ENCODE measurements at regions of chr3 and their contacts with region 1.

Region 1: DNA sequence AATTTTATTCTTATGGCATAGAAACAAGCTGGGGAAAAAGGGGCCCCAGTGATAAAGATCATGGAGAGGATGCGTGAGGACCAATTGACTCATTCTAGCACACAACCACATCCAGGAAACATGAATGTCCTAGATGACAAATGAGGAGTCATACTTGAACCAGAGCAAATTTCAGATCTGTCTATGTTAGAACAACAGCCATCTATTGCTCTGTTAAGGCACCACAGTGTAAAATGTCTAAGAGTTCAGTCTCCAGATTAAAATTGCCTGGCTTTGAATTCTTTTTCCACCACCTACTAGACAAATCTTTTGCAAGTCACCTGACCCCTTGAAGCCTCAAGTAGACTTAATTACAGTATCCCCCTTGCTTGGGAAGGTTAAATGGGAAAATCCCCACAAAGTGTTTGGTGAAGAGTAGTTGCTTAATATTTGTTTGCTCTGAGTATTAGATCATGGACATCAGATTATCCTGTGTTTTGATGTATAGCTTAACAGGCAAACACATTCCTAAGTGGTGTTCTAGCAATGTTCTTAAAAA is 258.7 kb upstream of the TGFBR2 start:
- DNase-seq: peak; percentile 73
- H3K4me3 Mint-ChIP-seq: peak overlapping the region; percentile 8
- H3K27ac Mint-ChIP-seq: peak overlapping the region; percentile 80
- H3K4me1 Mint-ChIP-seq: peaks cover 89% of the 10 kb centered on the region
- H3K27me3 Mint-ChIP-seq: no peaks in the 10 kb centered on the region

Region 2: DNA sequence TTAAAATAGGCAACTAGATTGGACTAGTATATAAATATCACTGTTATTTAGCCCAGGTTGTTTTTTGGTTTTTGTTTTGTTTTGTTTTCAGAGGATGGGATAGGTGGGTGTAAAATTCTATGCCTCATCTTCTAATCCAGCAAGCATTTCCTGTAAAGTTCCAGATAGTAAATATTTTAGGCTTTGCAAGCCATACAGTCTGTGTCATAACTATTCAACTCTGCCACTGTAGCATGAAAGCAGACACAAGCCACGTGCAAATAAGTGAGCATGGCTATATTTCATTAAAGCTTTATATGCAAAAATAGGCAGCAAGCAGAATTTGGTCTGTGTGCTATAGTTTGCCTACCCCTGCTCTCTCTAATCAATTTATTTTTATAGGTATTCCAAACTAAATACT is 398.6 kb before region 1 on chr3:
- CTCF ChIA-PET with region 1: no interaction called
- intact Hi-C with region 1: no loop called
- DNase-seq: no peak
- H3K4me3 Mint-ChIP-seq: no peak overlapping the region
- H3K27ac Mint-ChIP-seq: no peak overlapping the region
- H3K4me1 Mint-ChIP-seq: no peaks in the 10 kb centered on the region
- H3K27me3 Mint-ChIP-seq: no peaks in the 10 kb centered on the region

Region 3: DNA sequence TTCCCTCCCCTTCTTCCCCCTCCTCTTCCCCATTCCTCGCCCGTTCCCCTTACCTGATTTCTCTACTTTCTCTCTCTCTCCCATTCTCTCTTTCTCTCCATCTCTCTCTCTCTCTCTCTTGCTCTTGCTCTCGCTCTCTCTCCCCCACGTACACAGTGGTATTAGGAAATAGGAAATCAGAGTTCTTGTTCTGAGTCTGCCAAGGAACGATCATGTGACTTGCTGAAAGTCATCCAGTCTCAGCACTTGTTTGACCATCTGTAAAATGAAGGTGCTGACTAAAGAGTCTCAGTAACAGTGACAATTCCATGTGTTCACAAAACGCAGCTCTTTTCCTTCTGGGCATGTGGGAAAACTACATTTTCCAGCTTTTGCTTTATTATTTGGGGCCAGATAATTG is 186.4 kb before region 1 on chr3:
- CTCF ChIA-PET with region 1: no interaction called
- intact Hi-C with region 1: no loop called
- DNase-seq: no peak
- H3K4me3 Mint-ChIP-seq: no peak overlapping the region
- H3K27ac Mint-ChIP-seq: no peak overlapping the region
- H3K4me1 Mint-ChIP-seq: no peaks in the 10 kb centered on the region
- H3K27me3 Mint-ChIP-seq: no peaks in the 10 kb centered on the region

Region 4: GRCh38 chr3:30302027-30302426 is 45.7 kb before region 1 on chr3:
- CTCF ChIA-PET with region 1: no interaction called
- intact Hi-C with region 1: loop called (anchors 1 kb)
- DNase-seq: peak; percentile 18
- H3K4me3 Mint-ChIP-seq: no peak overlapping the region
- H3K27ac Mint-ChIP-seq: no peak overlapping the region
- H3K4me1 Mint-ChIP-seq: peaks cover 15% of the 10 kb centered on the region
- H3K27me3 Mint-ChIP-seq: peaks cover 2% of the 10 kb centered on the region

Region 5: DNA sequence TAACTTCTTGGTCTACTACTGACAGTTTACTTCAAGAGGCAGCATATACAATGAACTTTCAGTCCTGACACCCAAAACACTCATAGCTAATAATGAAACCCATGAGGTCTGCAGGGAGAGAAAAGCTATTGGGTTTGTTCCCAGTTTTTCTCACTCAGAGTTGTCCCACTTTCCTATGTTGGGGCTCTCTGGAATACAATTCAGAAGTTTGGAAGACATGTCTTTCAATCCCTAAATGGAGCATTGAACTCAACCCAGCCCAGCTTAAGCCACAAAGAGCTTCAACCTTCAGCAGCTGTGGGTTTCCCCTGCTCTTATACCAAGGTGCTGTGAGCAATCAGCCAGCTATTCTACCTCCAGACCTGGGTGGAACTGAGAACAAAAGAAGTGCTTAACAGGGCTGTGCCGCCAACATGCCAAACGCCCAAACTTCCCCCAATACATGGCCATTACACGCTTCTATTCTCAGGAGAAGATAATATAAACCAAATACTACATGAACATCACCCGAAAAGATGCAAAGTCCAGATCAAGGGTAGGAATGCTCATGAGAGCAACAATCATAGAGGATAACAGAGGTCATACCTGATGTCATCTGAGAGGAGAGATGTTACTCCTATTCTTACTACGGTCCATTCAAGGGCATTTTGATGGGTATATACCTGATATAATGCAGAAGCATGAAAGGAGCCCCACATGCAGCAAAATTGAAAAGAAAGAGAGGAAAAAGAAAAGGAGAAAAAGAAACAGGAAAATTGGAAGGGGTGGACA is 127.5 kb after region 1 on chr3:
- CTCF ChIA-PET with region 1: interaction called, 3 read pairs
- intact Hi-C with region 1: loop called (anchors 1 kb)
- DNase-seq: peak; percentile 64
- H3K4me3 Mint-ChIP-seq: peak overlapping the region; percentile 2
- H3K27ac Mint-ChIP-seq: peak overlapping the region; percentile 14
- H3K4me1 Mint-ChIP-seq: peaks cover 52% of the 10 kb centered on the region
- H3K27me3 Mint-ChIP-seq: no peaks in the 10 kb centered on the region

Region 6: GRCh38 chr3:30606301-30607031 is 258.7 kb after region 1 on chr3 and contains the start of gene TGFBR2:
- CTCF ChIA-PET with region 1: no interaction called
- intact Hi-C with region 1: loop called (anchors 2 kb)
- DNase-seq: peak; percentile 90
- H3K4me3 Mint-ChIP-seq: peak within 1 kb of the TSS; percentile 94
- H3K27ac Mint-ChIP-seq: peak within 1 kb of the TSS; percentile 100
- H3K4me1 Mint-ChIP-seq: peaks cover 52% of the 10 kb centered on the region
- H3K27me3 Mint-ChIP-seq: no peaks in the 10 kb centered on the region
- total RNA-seq, gene TGFBR2: 57.8 to 58.1 TPM

Region 7: GRCh38 chr3:30681643-30682211 is 334.0 kb after region 1 on chr3:
- CTCF ChIA-PET with region 1: interaction called, 3 read pairs
- intact Hi-C with region 1: loop called (anchors 1 kb)
- DNase-seq: peak; percentile 45
- H3K4me3 Mint-ChIP-seq: peak overlapping the region; percentile 18
- H3K27ac Mint-ChIP-seq: peak overlapping the region; percentile 93
- H3K4me1 Mint-ChIP-seq: peaks cover 100% of the 10 kb centered on the region
- H3K27me3 Mint-ChIP-seq: no peaks in the 10 kb centered on the region

Region 8: DNA sequence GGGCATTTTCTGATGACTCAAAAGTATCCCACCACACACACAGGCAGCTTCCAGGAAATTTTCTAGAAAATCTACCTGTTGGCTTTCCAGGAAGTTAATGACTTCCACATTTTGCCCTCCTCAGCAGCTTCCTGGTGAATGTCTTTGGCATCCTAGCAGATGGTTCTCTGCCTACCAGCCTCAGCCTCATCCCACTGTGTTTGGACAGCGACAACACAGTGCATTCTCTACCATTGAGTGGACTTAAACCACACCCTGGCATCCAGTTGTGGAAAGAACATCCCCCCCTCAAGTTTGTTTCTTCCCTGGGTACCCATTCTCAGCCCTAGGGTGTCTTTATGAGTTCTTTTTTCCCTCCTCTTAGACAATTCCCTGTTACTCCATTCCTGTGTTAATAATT is 597.5 kb after region 1 on chr3:
- CTCF ChIA-PET with region 1: no interaction called
- intact Hi-C with region 1: no loop called
- DNase-seq: no peak
- H3K4me3 Mint-ChIP-seq: no peak overlapping the region
- H3K27ac Mint-ChIP-seq: no peak overlapping the region
- H3K4me1 Mint-ChIP-seq: peaks cover 11% of the 10 kb centered on the region
- H3K27me3 Mint-ChIP-seq: no peaks in the 10 kb centered on the region

Region 9: DNA sequence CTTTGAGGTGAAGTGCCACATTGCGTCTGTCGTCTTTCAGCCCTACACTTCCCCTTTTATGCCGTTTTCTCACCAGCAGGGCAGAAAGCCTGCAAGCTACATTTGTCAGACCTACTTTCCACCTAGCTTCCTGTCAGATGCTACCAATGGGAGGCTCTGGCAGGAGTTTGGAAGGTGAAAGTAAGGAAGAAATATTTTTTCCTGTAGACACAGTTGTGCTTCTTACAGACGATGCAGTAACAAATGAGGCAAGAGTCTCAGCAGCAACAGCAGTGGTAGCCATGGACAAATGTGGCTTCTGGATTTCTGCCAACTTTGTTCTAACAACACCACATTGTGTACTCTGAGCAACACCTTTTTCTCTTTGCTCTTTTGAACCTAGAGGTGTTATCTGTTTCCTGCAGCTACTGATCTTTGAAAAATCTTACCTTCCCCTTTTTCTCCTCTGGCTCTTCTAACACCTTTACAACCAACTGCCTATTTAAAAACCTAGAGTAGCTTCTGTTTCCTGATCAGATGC is 1114.4 kb after region 1 on chr3:
- CTCF ChIA-PET with region 1: no interaction called
- intact Hi-C with region 1: loop called (anchors 5 kb)
- DNase-seq: peak; percentile 56
- H3K4me3 Mint-ChIP-seq: peak overlapping the region; percentile 35
- H3K27ac Mint-ChIP-seq: peak overlapping the region; percentile 70
- H3K4me1 Mint-ChIP-seq: peaks cover 51% of the 10 kb centered on the region
- H3K27me3 Mint-ChIP-seq: no peaks in the 10 kb centered on the region

Measured in activated naive CD4-positive, alpha-beta T cell treated with anti-CD3 and anti-CD28 coated beads for 36 hours (primary cell).